Cardiac septum (tissue), 1 donor: ENCODE measurements at regions of chr14 and their contacts with region 1.

Region 1: GRCh38 chr14:59254942-59255545 is 66.6 kb downstream of the DAAM1 start:
- DNase-seq: no peak

Region 2: DNA sequence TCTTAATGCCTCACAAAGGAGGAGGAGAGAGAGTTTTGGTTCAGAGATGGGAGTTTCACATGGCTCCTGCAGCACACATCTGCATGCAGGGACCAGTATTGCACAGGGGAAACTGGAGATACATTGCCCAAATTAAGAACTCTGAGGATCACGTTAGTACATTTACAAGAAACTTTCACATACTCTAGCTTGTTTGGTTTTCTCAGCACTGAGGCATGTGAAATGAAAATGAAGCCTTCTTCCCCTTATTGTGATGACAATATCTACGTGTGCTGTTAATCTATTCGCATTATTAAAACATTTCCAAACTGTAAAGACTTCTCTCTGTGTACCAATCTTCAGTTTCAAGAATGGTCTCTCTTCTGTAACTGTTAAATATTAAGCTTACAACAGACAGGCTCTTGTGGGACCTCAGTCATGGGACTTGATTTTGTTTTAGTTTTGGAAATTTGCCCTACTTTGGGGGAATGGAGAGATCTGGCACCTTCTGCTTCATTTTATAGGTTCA is 58.2 kb after region 1 on chr14:
- intact Hi-C with region 1: loop called (anchors 5 kb)
- DNase-seq: no peak

Region 3: DNA sequence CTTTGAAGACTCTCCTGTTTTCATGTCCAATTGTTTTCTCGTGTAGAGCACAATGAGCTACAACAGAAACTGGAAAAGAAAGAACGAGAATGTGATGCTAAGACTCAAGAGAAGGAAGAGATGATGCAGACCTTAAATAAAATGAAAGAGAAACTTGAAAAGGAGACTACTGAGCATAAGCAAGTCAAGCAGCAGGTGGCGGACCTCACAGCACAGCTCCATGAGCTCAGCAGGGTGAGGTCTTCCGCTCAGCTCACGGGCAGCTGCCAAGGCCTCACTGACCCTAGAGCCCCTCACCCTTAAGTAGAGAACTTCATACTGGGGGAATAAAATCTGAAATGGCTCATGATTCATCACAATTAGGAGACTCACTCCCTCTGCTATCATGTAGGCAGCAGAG is 75.4 kb after region 1 on chr14:
- intact Hi-C with region 1: no loop called
- DNase-seq: no peak

Region 4: DNA sequence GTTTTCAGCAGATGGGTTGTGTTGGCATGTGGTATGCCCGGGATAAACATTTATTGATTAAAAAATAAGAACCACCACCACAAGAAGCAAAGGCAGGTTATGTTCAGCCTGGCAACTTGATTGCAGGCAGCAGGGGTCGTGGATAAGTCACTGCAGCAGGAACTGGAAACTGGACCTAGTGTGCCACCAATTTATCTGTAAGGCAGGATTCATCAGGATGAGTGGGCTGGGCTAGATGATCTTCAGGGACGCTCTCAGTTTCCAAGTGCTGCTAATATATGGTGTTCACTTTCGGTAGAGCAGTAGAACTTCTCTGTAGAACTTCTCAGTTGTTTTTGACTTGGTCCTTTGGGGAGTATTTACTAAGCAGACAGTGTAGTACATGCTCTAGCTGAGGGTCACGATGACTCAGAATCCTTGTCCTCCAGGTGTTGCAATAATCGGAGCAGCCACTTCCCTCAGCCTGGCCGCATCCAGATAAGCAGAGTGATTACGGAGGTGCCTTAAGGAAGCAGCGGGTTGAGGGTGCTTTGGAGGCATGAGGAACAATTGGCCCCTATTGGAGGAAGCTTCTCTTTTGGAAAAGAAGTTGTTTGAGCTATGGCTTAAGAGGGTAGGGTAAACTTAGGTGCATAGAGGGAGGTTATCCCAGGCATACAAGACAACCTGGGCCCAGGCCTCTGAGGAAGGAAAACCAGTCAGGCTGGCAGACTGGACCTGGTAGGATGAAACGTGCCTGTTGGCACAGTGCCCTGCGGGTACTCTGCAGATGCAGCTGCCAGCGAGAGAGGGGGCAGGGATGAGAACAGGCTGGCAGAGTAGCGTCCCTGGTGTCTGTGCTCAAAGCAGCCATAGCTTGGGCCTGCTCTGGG is 106.1 kb after region 1 on chr14:
- intact Hi-C with region 1: no loop called
- DNase-seq: peak; percentile 87